ENCODE measurements at regions of chr5 and their contacts with region 1.

Region 1: DNA sequence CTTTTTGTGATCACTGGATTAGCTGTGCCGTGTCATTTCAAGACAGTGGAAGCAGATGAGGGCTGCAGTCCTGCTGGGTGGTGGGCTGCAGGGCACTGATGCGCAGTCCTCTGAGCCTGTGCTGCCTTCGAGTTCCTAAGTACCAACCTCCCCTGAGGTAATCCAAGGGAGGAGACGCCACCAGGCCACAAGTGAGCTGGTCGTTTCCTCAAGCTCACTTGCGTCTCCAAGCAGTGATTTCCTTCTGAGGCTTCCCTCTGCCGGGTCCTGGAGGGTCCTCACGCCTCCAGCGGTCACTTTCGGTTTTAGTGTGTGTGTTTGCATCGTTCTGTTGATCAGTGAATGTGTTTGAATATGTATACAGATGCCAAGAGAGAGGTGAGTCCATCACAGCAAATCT is 115.7 kb downstream of the TRIO start:
- DNase-seq: no peak
- H3K4me3 ChIP-seq: no peak overlapping the region
- H3K27ac ChIP-seq: peak overlapping the region in 2 of 4 donors; percentile 11 to 56
- H3K4me1 ChIP-seq: peaks cover 0 to 71% (median 57%) of the 10 kb centered on the region in 4 donors
- H3K27me3 ChIP-seq: no peaks in the 10 kb centered on the region
- CTCF ChIP-seq: no peak
- EP300 ChIP-seq: no peak
- POLR2A ChIP-seq: no peak

Region 2: GRCh38 chr5:14223372-14223771 is 35.5 kb before region 1 on chr5:
- intact Hi-C with region 1: loop called (anchors 5 kb)
- DNase-seq: no peak
- H3K4me3 ChIP-seq: no peak overlapping the region
- H3K27ac ChIP-seq: no peak overlapping the region
- H3K4me1 ChIP-seq: peaks cover 0 to 66% (median 48%) of the 10 kb centered on the region in 4 donors
- H3K27me3 ChIP-seq: no peaks in the 10 kb centered on the region
- CTCF ChIP-seq: no peak
- EP300 ChIP-seq: no peak
- POLR2A ChIP-seq: no peak